ENCODE measurements at regions of chr6 and their contacts with region 1.

Region 1: GRCh38 chr6:3742426-3743344 is 8.8 kb downstream of the PXDC1 start:
- DNase-seq: peak; percentile 96
- H3K4me3 Mint-ChIP-seq: peak overlapping the region; percentile 52
- H3K27ac Mint-ChIP-seq: peak overlapping the region; percentile 34
- H3K4me1 Mint-ChIP-seq: peaks cover 9% of the 10 kb centered on the region
- H3K27me3 Mint-ChIP-seq: peaks cover 22% of the 10 kb centered on the region

Region 2: DNA sequence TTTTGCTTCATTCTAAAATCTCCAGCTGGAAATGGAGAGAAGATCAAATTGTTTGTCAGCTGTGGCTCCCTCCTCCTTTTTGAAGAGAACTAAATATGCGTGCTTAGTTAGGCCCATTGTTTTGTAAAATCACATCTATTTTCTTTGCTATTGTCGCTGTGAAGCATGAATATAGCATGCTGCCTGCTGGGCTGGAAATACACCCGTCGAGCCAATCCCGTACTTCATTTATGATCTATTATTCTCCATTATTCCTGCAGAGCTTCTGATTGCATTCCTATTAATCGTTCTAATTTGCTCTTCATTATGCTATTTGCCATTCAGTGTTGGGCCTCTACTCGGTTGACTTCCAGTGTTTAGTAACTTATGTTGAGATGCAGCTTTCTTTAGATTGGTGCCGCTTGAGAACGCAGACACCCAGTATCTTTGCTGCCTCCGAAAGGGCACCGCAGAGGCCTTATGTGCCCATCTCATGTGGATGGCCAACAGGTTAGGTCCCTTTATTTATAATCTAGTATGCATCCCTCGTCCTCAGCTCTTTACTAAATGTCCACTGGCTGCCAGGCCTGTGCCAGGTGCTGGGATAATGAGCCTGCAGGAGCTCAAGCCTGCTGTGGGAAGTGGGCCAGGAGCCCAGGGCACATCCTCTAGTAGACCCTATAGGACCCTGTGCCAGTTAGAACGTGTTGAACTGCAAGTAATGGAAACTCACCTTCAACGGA is 152.1 kb after region 1 on chr6:
- intact Hi-C with region 1: no loop called
- DNase-seq: no peak
- H3K4me3 Mint-ChIP-seq: no peak overlapping the region
- H3K27ac Mint-ChIP-seq: no peak overlapping the region
- H3K4me1 Mint-ChIP-seq: no peaks in the 10 kb centered on the region
- H3K27me3 Mint-ChIP-seq: peaks cover 16% of the 10 kb centered on the region

Region 3: GRCh38 chr6:3929281-3929798 is 186.7 kb after region 1 on chr6:
- intact Hi-C with region 1: loop called (anchors 1 kb)
- DNase-seq: no peak
- H3K4me3 Mint-ChIP-seq: no peak overlapping the region
- H3K27ac Mint-ChIP-seq: no peak overlapping the region
- H3K4me1 Mint-ChIP-seq: no peaks in the 10 kb centered on the region
- H3K27me3 Mint-ChIP-seq: peaks cover 16% of the 10 kb centered on the region

Region 4: DNA sequence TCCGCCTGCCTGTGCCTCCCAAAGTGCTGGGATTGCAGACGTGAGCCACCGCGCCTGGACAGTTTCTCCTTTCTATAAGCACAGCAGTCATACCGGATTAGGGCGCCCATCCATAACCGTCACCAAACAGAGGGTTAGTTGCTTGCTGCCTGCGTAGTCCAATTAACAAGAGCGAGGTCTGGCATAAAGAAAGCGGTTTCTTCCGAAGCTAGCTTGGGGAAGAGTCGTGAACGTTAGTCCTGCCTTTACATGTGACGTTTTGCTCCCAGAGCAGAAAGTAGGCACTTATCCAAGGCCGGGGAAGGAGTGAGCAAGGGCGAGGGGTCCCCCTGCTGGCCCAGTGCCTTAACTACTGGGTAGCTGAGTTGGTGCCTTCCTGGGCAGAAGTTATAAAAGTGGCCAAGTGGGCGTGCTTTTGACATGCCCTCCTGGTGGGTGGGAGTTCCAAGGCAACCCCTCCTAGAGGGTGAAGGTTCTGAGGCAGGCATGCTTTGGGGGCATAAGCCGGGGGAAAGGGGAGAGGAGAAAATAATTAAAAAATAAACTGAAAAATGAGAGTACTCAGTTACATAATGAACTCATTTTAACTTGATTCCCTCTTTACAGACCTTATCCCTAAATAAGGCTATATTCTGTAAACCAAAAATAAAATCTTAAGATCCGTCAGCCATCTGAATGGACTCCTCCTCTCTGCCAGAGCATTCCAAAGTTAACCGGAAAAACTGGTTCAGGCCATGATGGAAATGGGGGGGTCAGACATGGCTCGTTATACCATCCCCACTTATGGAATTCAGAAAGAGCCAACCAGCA is 248.2 kb after region 1 on chr6:
- intact Hi-C with region 1: loop called (anchors 1 kb)
- DNase-seq: peak; percentile 90
- H3K4me3 Mint-ChIP-seq: no peak overlapping the region
- H3K27ac Mint-ChIP-seq: no peak overlapping the region
- H3K4me1 Mint-ChIP-seq: peaks cover 10% of the 10 kb centered on the region
- H3K27me3 Mint-ChIP-seq: no peaks in the 10 kb centered on the region

Region 5: GRCh38 chr6:4155848-4156466 is 413.3 kb after region 1 on chr6:
- intact Hi-C with region 1: loop called (anchors 5 kb)
- DNase-seq: peak; percentile 94
- H3K4me3 Mint-ChIP-seq: no peak overlapping the region
- H3K27ac Mint-ChIP-seq: peak overlapping the region; percentile 56
- H3K4me1 Mint-ChIP-seq: peaks cover 4% of the 10 kb centered on the region
- H3K27me3 Mint-ChIP-seq: peaks cover 7% of the 10 kb centered on the region

Region 6: GRCh38 chr6:4936681-4937041 is 1194.0 kb after region 1 on chr6:
- intact Hi-C with region 1: loop called (anchors 10 kb)
- DNase-seq: no peak
- H3K4me3 Mint-ChIP-seq: no peak overlapping the region
- H3K27ac Mint-ChIP-seq: no peak overlapping the region
- H3K4me1 Mint-ChIP-seq: peaks cover 32% of the 10 kb centered on the region
- H3K27me3 Mint-ChIP-seq: no peaks in the 10 kb centered on the region

Measured in activated CD4-positive, alpha-beta T cell treated with anti-CD3 and anti-CD28 coated beads, Interleukin-2, amount 10 ng/mL, durations not matched to agents 24 days and 14 days (primary cell).